Breast epithelium (tissue), 4 donors: ENCODE measurements at regions of chr17 and their contacts with region 1.

Region 1: DNA sequence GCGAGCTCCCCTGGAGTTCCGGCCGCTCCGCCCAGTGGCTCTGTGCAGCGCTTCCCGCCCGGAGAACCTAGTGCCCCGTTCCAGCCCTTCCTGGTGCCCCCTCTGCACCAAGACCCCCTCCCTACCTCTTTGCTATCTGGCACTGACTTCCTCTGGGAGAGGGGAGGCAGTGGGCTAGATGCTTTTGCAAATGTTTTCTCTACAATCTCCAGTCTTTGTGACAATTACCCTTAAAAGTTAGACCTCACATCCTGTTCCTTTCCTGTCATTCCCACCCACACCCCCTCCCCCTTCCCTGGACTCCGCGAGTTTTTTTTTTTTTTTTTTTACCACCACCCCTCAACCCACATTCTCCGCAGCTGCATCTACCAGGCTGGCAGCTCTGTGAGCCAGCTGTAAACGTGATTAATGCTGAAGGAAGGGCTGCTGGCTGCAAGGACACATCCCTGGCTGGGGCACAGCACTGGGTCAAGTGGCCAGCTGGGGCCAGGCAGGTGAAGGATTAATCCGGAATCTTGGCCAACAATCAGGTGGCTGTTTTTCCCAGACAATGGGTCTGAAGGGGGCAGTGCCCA is 101.5 kb downstream of the MGAT5B start:
- DNase-seq: no peak
- H3K4me3 ChIP-seq: peak overlapping the region in 2 of 3 donors; percentile 41 to 57
- H3K27ac ChIP-seq: no peak overlapping the region
- H3K4me1 ChIP-seq: peaks cover 0 to 9% of the 10 kb centered on the region in 2 donors
- H3K27me3 ChIP-seq: peaks cover 0 to 18% of the 10 kb centered on the region in 2 donors
- CTCF ChIP-seq: no peak
- POLR2A ChIP-seq: no peak

Region 2: DNA sequence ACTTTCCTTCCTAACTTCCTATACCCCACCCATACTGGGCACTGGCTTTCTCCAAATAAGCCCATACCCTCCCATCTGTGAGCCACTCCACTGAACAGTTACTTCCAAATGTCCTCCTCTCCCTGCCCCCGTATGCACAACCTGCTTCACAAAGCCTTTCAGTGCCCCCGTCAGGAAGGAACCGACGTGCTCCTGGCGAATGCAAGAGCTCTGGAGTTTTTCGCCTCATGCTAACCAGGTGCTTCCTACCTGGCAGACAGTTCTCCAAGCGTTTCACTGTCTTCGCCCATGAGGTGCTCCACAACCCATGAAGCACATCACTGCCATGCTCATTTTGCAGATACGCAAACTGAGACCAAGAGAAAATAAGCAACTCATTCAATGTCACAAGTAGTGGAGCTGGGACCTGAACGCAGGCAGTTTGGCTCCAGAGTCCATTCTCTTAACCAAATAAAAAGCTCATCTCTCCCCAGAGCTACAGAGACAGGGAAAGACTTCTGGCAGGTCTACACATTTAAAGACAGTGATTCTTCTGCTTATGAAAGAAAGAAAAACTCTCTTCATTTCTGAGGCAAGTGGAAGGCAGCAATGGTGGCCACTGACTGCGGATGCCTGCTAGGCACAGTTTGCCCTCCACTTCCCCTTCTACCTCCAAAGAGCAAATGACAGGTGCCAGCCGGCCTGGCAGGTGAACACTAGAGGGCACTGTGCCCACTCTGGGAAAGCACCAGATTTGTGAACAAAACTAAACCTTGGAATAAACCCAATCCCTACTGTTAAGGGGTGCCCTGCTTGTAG is 561.4 kb before region 1 on chr17:
- intact Hi-C with region 1: loop called (anchors 10 kb)
- DNase-seq: peak; percentile 55 to 74
- H3K4me3 ChIP-seq: no peak overlapping the region
- H3K27ac ChIP-seq: no peak overlapping the region
- H3K4me1 ChIP-seq: no peaks in the 10 kb centered on the region
- H3K27me3 ChIP-seq: no peaks in the 10 kb centered on the region
- CTCF ChIP-seq: peak; percentile 34 to 63 (median 44)
- POLR2A ChIP-seq: no peak

Region 3: GRCh38 chr17:77842528-77843147 is 873.0 kb after region 1 on chr17:
- intact Hi-C with region 1: loop called (anchors 10 kb)
- DNase-seq: no peak
- H3K4me3 ChIP-seq: no peak overlapping the region
- H3K27ac ChIP-seq: no peak overlapping the region
- H3K4me1 ChIP-seq: no peaks in the 10 kb centered on the region
- H3K27me3 ChIP-seq: no peaks in the 10 kb centered on the region
- CTCF ChIP-seq: no peak
- POLR2A ChIP-seq: no peak